IMR-90 (cell line): ENCODE measurements at regions of chr9 and their contacts with region 1.

Region 1: DNA sequence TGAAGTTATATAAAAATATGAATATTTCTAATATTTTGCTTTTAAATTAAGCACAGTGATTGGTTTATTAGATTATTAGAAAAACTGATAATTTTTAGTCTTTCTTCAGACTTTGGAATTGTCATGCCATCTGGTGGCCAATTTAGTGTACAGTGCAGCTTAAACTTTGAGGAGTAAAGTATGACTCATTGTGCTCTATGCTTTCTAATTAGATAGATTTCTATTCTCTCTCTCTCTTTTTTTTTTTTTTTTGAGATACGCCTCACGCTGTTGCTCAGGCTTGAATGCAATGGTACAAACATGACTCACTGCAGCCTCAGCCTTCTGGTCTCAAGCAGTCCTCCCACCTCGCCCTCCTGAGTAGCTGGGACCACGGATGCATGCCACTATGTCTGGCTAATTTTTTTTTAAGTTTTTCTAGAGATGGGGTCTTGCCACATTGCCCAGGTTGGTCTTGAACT is 42.1 kb upstream of the GPR21 start:
- DNase-seq: peak; percentile 94
- ATAC-seq: peak; percentile 95
- H3K4me3 ChIP-seq: no peak overlapping the region
- H3K27ac ChIP-seq: no peak overlapping the region
- H3K4me1 ChIP-seq: no peaks in the 10 kb centered on the region
- H3K27me3 ChIP-seq: no peaks in the 10 kb centered on the region
- CTCF ChIP-seq: peak; percentile 78
- POLR2A ChIP-seq: no peak
- RAD21 ChIP-seq: peak; percentile 73

Region 2: DNA sequence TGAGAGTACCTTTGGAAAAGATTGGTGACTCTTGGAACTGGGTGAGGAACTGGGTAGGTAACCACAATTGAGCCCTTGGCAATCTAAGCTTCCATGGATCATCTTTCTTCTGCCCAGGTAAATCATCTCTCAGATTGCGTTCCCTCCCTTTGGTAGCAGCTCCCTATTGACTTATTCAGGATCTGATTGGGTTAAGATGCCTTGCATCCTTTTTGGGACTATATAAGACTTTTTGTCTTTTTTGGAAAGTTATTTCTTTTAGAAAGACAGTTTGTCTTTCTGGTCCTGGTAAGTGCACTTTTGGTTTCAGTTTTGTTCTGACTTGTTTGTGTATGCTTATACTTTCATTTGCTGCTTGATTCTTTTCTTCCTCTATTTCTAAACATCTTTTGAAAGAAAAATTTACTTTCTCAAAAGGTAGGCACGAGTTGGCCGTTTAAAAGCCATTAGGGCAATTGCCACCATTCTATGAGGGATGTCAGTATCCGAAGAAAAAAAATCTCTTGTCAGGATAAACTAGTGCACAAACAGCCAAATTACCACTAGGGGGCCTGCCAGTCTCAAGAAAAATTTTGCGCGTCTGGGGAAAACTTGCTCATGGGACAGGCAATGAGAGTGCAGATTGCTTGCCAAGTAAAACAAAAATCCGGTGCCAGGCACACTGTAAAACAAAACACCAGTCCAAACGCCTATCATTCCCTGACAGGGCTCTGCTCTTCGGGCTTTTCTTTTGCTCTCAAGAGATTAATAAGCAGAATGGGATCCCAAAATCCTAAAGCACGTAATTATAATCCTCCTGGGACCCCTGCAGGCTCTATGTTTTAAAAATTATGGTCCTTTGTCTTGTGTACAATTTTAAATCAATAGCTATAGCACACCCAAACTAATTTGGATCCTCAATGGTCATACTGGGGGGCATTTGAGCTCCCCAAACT is 526.5 kb before region 1 on chr9:
- CTCF ChIA-PET with region 1: no interaction called
- POLR2A ChIA-PET with region 1: no interaction called
- dilution Hi-C with region 1: no loop called
- in situ Hi-C with region 1: no loop called
- intact Hi-C with region 1: loop called (anchors 5 kb)
- DNase-seq: peak; percentile 91
- ATAC-seq: peak; percentile 77
- H3K4me3 ChIP-seq: peak overlapping the region; percentile 54; the same call in 1 of the 2 replicates
- H3K27ac ChIP-seq: peak overlapping the region; percentile 15; the same call in 1 of the 2 replicates
- H3K4me1 ChIP-seq: no peaks in the 10 kb centered on the region; the same call in 1 of the 2 replicates
- H3K27me3 ChIP-seq: no peaks in the 10 kb centered on the region
- CTCF ChIP-seq: peak; percentile 90
- POLR2A ChIP-seq: no peak
- RAD21 ChIP-seq: peak; percentile 79

Region 3: GRCh38 chr9:122860317-122861142 is 130.9 kb before region 1 on chr9:
- CTCF ChIA-PET with region 1: no interaction called
- POLR2A ChIA-PET with region 1: no interaction called
- dilution Hi-C with region 1: no loop called
- in situ Hi-C with region 1: loop called (anchors 10 kb)
- intact Hi-C with region 1: no loop called
- DNase-seq: no peak
- ATAC-seq: peak; percentile 35
- H3K4me3 ChIP-seq: no peak overlapping the region
- H3K27ac ChIP-seq: no peak overlapping the region
- H3K4me1 ChIP-seq: no peaks in the 10 kb centered on the region; the same call in 1 of the 2 replicates
- H3K27me3 ChIP-seq: no peaks in the 10 kb centered on the region
- CTCF ChIP-seq: no peak
- POLR2A ChIP-seq: no peak
- RAD21 ChIP-seq: no peak

Region 4: DNA sequence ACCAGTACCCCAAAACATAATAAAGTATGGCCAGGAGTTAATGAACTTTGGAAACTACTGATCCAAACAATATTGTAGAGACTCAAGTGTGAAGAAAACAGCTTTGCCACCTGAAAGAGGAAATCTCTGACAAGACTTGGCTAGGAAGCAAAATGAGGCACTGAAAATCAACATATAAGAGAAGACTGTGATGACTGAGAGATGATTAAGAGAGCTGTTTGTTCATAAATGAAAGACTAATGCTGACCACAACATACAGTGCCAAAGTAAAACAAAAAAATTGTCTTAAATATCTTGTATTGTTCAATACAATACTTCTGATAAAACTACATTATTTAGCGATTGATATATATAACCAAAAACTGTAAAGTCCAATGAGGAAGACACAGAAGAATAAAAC is 93.4 kb before region 1 on chr9:
- CTCF ChIA-PET with region 1: no interaction called
- POLR2A ChIA-PET with region 1: no interaction called
- dilution Hi-C with region 1: loop called (anchors 25 kb)
- in situ Hi-C with region 1: no loop called
- intact Hi-C with region 1: no loop called
- DNase-seq: peak; percentile 46
- ATAC-seq: no peak
- H3K4me3 ChIP-seq: no peak overlapping the region
- H3K27ac ChIP-seq: no peak overlapping the region
- H3K4me1 ChIP-seq: peaks cover 5% of the 10 kb centered on the region
- H3K27me3 ChIP-seq: no peaks in the 10 kb centered on the region
- CTCF ChIP-seq: no peak
- POLR2A ChIP-seq: no peak
- RAD21 ChIP-seq: no peak

Region 5: GRCh38 chr9:122904823-122905710 is 86.3 kb before region 1 on chr9 and contains the start of gene RC3H2:
- CTCF ChIA-PET with region 1: no interaction called
- POLR2A ChIA-PET with region 1: no interaction called
- dilution Hi-C with region 1: no loop called
- in situ Hi-C with region 1: no loop called
- intact Hi-C with region 1: loop called (anchors 2 kb)
- DNase-seq: peak; percentile 100
- ATAC-seq: peak; percentile 95
- H3K4me3 ChIP-seq: peak within 1 kb of the TSS; percentile 99
- H3K27ac ChIP-seq: peak within 1 kb of the TSS; percentile 95
- H3K4me1 ChIP-seq: 0 out of 2 replicates have a peak, but pooled peaks cover 2% of the 10 kb centered on the region
- H3K27me3 ChIP-seq: no peaks in the 10 kb centered on the region
- CTCF ChIP-seq: no peak
- POLR2A ChIP-seq: peak; percentile 83
- RAD21 ChIP-seq: no peak
- total RNA-seq, gene RC3H2: 55.5 and 58.4 TPM in 2 replicates

Region 6: GRCh38 chr9:122949696-122950095 is 41.7 kb before region 1 on chr9:
- CTCF ChIA-PET with region 1: no interaction called
- POLR2A ChIA-PET with region 1: no interaction called
- dilution Hi-C with region 1: no loop called
- in situ Hi-C with region 1: no loop called
- intact Hi-C with region 1: loop called (anchors 5 kb)
- DNase-seq: peak; percentile 25
- ATAC-seq: no peak
- H3K4me3 ChIP-seq: no peak overlapping the region
- H3K27ac ChIP-seq: no peak overlapping the region
- H3K4me1 ChIP-seq: peaks cover 7% of the 10 kb centered on the region
- H3K27me3 ChIP-seq: no peaks in the 10 kb centered on the region
- CTCF ChIP-seq: no peak
- POLR2A ChIP-seq: no peak
- RAD21 ChIP-seq: no peak

Region 7: DNA sequence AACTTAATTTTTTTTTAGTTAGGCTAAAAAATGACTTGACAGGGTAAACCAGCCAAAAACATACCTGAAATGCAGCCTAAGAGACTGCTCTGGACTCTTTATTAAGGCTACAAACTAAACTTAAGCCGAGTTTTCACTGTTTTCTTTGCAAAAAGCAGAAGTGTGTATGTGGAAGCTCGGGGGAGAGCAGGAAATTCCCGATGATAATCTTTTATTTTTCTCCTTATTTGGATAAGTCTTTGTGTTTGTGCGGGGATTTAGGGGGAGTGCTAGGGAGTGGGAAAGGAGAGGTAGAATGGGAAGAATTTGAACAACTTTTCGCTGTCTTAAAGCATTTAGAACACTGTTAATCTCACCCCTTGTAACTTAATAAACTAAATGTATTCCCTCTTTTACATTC is 11.4 kb after region 1 on chr9:
- CTCF ChIA-PET with region 1: interaction called, 6 read pairs
- POLR2A ChIA-PET with region 1: interaction called, 17 read pairs
- dilution Hi-C with region 1: no loop called
- in situ Hi-C with region 1: no loop called
- intact Hi-C with region 1: no loop called
- DNase-seq: peak; percentile 18
- ATAC-seq: peak; percentile 15
- H3K4me3 ChIP-seq: no peak overlapping the region
- H3K27ac ChIP-seq: peak overlapping the region; percentile 80; the same call in 1 of the 2 replicates
- H3K4me1 ChIP-seq: peaks cover 5% of the 10 kb centered on the region; the same call in 1 of the 2 replicates
- H3K27me3 ChIP-seq: no peaks in the 10 kb centered on the region
- CTCF ChIP-seq: no peak
- POLR2A ChIP-seq: no peak
- RAD21 ChIP-seq: no peak

Region 8: DNA sequence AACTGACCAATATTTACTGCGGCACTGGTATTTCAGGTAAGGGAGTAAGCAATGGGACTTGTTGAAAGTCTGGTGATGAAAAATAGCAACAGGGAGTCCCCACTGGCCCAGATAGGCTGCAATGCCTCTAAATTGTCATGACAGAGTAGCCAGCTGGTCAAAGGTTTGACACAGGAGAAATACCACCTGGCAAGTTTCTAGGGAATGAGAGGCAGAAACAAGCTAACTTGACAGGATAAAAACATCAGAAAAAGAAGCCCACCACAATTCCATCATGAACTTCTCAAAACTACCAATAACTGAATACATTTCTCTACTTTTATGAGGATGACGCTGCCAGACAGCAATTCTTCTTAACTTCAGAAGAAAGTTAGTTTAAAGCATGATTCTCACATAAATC is 177.2 kb after region 1 on chr9:
- CTCF ChIA-PET with region 1: no interaction called
- POLR2A ChIA-PET with region 1: no interaction called
- dilution Hi-C with region 1: no loop called
- in situ Hi-C with region 1: no loop called
- intact Hi-C with region 1: no loop called
- DNase-seq: no peak
- ATAC-seq: no peak
- H3K4me3 ChIP-seq: no peak overlapping the region
- H3K27ac ChIP-seq: no peak overlapping the region
- H3K4me1 ChIP-seq: peaks cover 2% of the 10 kb centered on the region; the same call in 1 of the 2 replicates
- H3K27me3 ChIP-seq: no peaks in the 10 kb centered on the region
- CTCF ChIP-seq: no peak
- POLR2A ChIP-seq: no peak
- RAD21 ChIP-seq: no peak

Region 9: GRCh38 chr9:124079176-124079925 is 1088.0 kb after region 1 on chr9:
- CTCF ChIA-PET with region 1: no interaction called
- POLR2A ChIA-PET with region 1: no interaction called
- dilution Hi-C with region 1: no loop called
- in situ Hi-C with region 1: no loop called
- intact Hi-C with region 1: no loop called
- DNase-seq: peak; percentile 66
- ATAC-seq: peak; percentile 78
- H3K4me3 ChIP-seq: no peak overlapping the region
- H3K27ac ChIP-seq: no peak overlapping the region
- H3K4me1 ChIP-seq: peaks cover 10% of the 10 kb centered on the region
- H3K27me3 ChIP-seq: peaks cover 12% of the 10 kb centered on the region
- CTCF ChIP-seq: no peak
- POLR2A ChIP-seq: no peak
- RAD21 ChIP-seq: no peak